WTC11 (cell line): ENCODE measurements at regions of chr13 and their contacts with region 1.

Region 1: GRCh38 chr13:110352735-110353134 is 45.7 kb downstream of the COL4A2 start:
- DNase-seq: peak; percentile 83
- ATAC-seq: peak; percentile 71
- H3K4me3 Mint-ChIP-seq: no peak overlapping the region
- H3K27ac Mint-ChIP-seq: no peak overlapping the region
- H3K4me1 Mint-ChIP-seq: peaks cover 42% of the 10 kb centered on the region
- H3K27me3 Mint-ChIP-seq: no peaks in the 10 kb centered on the region; the same call in 1 of the 2 replicates
- CTCF ChIP-seq: peak; percentile 65

Region 2: GRCh38 chr13:110306960-110307746 is 45.6 kb before region 1 on chr13 and contains the starts of genes COL4A1 and COL4A2:
- CTCF ChIA-PET with region 1: interaction called, 12 read pairs
- POLR2A ChIA-PET with region 1: interaction called, 3 read pairs
- DNase-seq: peak; percentile 76
- ATAC-seq: peak; percentile 51
- H3K4me3 Mint-ChIP-seq: peak within 1 kb of the TSS; percentile 88
- H3K27ac Mint-ChIP-seq: no peak within 1 kb of the TSS
- H3K4me1 Mint-ChIP-seq: peaks cover 34% of the 10 kb centered on the region
- H3K27me3 Mint-ChIP-seq: peaks cover 35% of the 10 kb centered on the region
- CTCF ChIP-seq: no peak
- total RNA-seq, gene COL4A1: 75.0 to 89.6 TPM (median 82.3 TPM) in 3 replicates
- total RNA-seq, gene COL4A2: 102 to 109 TPM (median 106 TPM) in 3 replicates

Region 3: GRCh38 chr13:110330491-110331001 is 22.2 kb before region 1 on chr13:
- CTCF ChIA-PET with region 1: interaction called, 13 read pairs
- POLR2A ChIA-PET with region 1: interaction called, 4 read pairs
- DNase-seq: no peak
- ATAC-seq: no peak
- H3K4me3 Mint-ChIP-seq: no peak overlapping the region
- H3K27ac Mint-ChIP-seq: peak overlapping the region; percentile 62; the same call in 1 of the 2 replicates
- H3K4me1 Mint-ChIP-seq: peaks cover 60% of the 10 kb centered on the region
- H3K27me3 Mint-ChIP-seq: no peaks in the 10 kb centered on the region
- CTCF ChIP-seq: no peak

Region 4: DNA sequence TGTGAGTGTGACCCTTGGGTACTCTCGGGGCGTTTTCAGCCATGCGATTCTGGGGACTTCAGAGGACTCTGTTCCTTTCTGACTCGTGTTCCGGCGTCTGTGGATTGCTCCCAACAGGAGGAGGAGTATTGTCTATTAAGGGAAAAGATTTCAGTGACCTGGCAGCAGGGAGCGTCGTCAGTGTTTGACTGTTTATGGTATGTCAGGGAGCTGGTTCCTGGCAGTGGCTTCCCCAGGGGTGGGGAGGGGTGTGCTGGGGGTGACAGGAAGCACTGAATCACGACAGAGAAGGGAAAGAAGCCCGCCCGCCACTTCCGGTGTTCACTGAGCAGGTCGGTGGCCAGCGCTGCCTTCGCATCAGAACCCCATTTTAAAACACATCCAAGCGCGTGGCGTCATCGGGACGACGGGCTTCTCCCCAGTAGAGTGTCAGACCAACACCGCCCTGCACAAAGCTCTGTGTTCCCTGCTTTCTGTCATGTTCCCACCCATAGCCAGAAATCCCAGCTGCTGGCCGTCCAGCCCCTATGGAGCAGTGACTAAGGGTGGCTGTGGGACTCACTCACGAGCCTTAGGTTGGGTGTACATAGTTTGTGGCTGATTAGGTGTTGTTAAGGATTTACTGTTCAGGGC is 11.8 kb before region 1 on chr13:
- CTCF ChIA-PET with region 1: interaction called, 16 read pairs
- POLR2A ChIA-PET with region 1: no interaction called
- DNase-seq: no peak
- ATAC-seq: peak; percentile 41
- H3K4me3 Mint-ChIP-seq: no peak overlapping the region
- H3K27ac Mint-ChIP-seq: peak overlapping the region; percentile 78
- H3K4me1 Mint-ChIP-seq: peaks cover 38% of the 10 kb centered on the region
- H3K27me3 Mint-ChIP-seq: no peaks in the 10 kb centered on the region
- CTCF ChIP-seq: no peak

Region 5: DNA sequence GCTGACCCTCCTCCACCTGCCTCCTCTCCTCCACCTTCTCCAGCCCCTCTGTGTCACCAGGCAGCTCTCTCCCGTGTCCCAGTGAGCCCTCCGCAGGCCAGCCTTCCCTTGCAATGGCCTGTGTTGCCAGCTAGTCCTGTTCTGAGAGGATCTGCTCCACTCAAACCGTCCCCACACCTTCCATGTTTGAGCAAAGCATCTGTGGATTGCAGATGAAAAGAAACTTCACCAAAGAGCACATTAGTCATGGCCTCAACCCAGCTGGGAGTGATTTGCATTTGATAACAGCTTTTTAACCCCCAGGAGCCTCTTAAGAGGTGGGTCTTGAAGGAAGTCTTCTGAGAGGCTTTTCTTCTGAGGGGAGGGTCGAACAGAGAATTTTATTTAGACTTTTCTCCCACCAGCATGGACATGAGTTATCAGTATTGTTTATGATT is 27.2 kb after region 1 on chr13:
- CTCF ChIA-PET with region 1: interaction called, 11 read pairs
- POLR2A ChIA-PET with region 1: no interaction called
- DNase-seq: no peak
- ATAC-seq: peak; percentile 86
- H3K4me3 Mint-ChIP-seq: peak overlapping the region; percentile 37
- H3K27ac Mint-ChIP-seq: no peak overlapping the region; the same call in 1 of the 2 replicates
- H3K4me1 Mint-ChIP-seq: peaks cover 28% of the 10 kb centered on the region
- H3K27me3 Mint-ChIP-seq: peaks cover 31% of the 10 kb centered on the region
- CTCF ChIP-seq: no peak